Right ventricle myocardium inferior (tissue), 1 donor: ENCODE measurements at regions of chr1 and their contacts with region 1.

Region 1: GRCh38 chr1:197614916-197615692 is 160.2 kb downstream of the DENND1B start:
- DNase-seq: no peak
- ATAC-seq: peak; percentile 72

Region 2: GRCh38 chr1:197268012-197268411 is 347.1 kb before region 1 on chr1 and contains the start of gene CRB1:
- intact Hi-C with region 1: no loop called
- DNase-seq: no peak
- ATAC-seq: no peak
- total RNA-seq, gene CRB1: 0.16 TPM

Region 3: DNA sequence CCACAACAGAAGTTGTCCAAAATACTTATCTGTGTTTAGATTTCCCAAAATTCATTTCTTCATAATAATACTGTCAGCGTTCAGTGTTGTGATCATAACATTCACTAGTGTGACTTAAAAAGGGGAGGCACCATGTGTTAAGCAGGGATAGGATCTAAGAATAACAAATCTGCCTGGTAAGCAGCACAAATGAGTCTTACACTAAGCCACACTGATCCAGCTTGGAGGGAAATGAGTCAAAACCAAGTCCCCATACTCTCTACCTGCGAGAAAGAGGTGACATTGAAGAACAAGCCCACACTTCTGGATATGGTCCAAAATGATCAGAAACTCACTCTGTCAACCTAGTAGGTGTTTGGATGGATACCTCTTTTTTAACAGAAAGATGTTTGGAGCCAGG is 201.5 kb before region 1 on chr1:
- intact Hi-C with region 1: no loop called
- DNase-seq: no peak
- ATAC-seq: no peak

Region 4: DNA sequence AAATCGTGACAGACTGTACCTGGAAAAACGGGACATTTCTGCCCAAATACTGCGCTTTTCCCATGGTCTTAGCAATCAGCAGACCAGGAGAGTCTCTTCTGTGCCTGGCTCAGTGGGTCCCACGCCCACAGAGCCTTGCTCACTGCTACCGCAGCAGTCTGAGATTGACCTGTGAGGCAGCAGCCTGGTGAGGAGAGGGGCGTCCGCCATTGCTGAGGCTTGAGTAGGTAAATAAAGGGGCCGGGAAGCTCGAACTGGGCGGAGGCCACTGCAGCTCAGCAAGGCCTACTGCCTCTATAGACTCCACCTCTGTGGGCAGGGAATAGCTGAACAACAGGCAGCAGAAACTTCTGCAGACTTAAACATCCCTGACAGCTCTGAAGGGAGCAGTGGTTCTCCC is 42.9 kb before region 1 on chr1:
- intact Hi-C with region 1: no loop called
- DNase-seq: no peak
- ATAC-seq: no peak

Region 5: GRCh38 chr1:197774466-197775281 is 159.6 kb after region 1 on chr1:
- intact Hi-C with region 1: loop called (anchors 5 kb)
- DNase-seq: peak; percentile 77
- ATAC-seq: peak; percentile 81

Region 6: DNA sequence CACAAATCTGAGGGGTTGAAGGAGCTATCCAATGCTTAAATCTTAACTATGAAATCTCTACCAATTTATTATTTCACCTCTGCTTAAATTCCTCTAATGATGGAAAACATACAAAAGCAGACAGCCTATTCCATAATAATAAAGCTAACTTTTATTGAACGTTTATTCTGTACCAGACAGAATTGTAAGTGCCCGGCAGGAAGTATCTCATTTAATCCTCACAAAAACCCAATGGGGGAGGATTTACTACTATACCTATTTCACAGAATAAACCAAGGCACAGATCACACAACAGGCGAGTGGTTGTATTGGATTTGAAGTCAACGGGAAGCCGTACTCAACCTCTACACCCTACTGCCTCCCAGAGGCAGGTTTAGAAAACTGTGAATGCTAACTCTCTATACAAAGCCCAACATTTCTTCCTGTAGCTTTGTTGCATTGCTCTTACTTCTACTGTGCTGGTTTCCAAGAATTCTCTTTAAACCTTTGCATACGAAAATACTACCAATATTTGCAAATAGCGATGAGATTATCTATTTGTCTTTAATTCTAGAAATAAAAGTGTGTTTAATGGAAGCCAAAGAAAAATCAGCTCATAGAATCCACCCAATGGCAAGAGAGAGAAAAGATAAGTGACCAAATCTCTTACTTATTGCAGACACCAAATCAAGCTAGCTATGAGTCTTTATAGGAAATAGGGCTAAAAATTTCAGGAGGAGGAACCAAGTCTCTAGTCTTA is 253.8 kb after region 1 on chr1:
- intact Hi-C with region 1: loop called (anchors 2 kb)
- DNase-seq: no peak
- ATAC-seq: peak; percentile 86

Region 7: DNA sequence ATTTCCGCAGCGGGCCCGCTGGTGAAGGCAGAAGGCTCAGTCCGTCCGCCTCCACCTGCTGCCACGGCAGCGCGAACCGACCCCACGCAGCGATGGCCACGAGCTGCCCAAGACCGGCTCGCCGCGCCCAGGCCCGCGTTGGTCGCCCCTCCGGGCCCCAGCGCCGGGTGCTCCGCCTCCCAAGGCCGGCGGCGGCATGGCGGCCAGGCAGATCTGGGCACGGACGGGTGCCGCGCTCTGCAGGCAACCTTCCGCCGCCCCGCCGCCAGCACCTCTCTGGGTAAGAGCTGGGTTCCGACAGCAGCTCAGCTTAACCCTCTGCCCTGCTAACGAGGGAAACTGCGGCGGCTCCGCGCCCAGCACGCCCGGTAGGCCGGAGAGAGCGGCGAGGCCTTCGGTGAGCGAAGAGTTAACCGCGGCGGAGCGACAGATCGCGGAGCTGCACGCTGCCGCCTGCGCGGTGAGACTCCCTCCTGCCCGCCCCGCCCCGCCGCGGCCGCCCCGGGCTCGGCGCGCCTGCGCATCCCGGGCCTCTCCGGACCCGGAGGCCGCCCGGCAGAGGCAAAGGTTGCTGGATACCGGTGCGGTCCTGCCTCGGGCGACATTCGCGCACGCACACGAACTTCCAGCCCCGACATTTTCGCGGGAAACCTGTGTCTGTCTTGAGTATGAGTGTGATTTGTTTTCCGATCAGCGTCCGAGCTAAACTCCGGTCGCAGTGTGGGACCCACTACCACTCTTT is 287.5 kb after region 1 on chr1 and contains the start of gene C1orf53:
- intact Hi-C with region 1: loop called (anchors 10 kb)
- DNase-seq: peak; percentile 92
- ATAC-seq: peak; percentile 100
- total RNA-seq, gene C1orf53: 4.9 TPM